ENCODE measurements at regions of chr2 and their contacts with region 1.

Region 1: GRCh38 chr2:120231974-120232635 is 8.9 kb upstream of the TMEM185B start:
- DNase-seq: peak; percentile 64
- H3K4me3 ChIP-seq: peak overlapping the region; percentile 19 to 50 (median 46)
- H3K27ac ChIP-seq: peak overlapping the region; percentile 51 to 71 (median 66)
- H3K4me1 ChIP-seq: peaks cover 0 to 23% (median 13%) of the 10 kb centered on the region in 4 donors
- H3K27me3 ChIP-seq: no peaks in the 10 kb centered on the region
- CTCF ChIP-seq: no peak
- EP300 ChIP-seq: no peak
- POLR2A ChIP-seq: no peak

Region 2: DNA sequence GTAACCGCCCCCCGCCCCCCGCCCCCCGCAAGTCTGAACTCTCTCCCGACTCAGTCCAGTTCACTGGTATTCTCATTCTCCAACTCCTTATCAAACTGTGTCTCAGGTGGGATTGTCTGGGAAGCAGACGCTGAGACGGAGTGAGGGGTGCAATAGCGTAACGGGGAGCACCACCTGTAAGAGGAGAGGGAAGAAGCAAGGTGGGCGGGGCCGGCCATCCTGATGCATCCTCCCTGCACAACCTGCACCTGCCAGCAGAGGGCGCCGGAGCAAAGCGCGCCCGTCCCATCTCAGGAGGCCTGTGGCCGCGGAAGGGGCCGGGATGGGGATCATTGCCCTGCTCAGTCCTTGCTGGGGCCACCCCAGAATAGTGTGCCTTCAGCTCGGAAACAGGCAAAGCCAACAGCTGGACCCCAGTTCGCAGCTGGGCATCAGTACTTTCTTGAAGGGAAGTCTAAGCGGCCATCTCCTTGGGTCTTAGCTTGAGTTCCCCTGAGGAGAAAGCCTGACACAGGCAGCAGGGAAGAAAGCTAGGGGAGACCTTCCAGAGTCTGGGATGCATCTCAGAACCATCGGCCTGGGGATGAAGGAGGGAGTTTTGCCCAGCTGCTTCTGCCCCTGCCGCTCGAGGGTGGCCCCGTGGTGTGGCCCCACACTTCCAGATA is 844.9 kb after region 1 on chr2:
- intact Hi-C with region 1: loop called (anchors 10 kb)
- DNase-seq: no peak
- H3K4me3 ChIP-seq: no peak overlapping the region
- H3K27ac ChIP-seq: no peak overlapping the region
- H3K4me1 ChIP-seq: peaks cover 0 to 41% (median 29%) of the 10 kb centered on the region in 4 donors
- H3K27me3 ChIP-seq: peaks cover 0 to 7% (median 0%) of the 10 kb centered on the region in 3 donors
- CTCF ChIP-seq: peak in 3 of 4 experiments; percentile 55 to 78 (median 66)
- EP300 ChIP-seq: no peak
- POLR2A ChIP-seq: no peak